Vagina (tissue), 2 donors: ENCODE measurements at regions of chr16 and their contacts with region 1.

Region 1: DNA sequence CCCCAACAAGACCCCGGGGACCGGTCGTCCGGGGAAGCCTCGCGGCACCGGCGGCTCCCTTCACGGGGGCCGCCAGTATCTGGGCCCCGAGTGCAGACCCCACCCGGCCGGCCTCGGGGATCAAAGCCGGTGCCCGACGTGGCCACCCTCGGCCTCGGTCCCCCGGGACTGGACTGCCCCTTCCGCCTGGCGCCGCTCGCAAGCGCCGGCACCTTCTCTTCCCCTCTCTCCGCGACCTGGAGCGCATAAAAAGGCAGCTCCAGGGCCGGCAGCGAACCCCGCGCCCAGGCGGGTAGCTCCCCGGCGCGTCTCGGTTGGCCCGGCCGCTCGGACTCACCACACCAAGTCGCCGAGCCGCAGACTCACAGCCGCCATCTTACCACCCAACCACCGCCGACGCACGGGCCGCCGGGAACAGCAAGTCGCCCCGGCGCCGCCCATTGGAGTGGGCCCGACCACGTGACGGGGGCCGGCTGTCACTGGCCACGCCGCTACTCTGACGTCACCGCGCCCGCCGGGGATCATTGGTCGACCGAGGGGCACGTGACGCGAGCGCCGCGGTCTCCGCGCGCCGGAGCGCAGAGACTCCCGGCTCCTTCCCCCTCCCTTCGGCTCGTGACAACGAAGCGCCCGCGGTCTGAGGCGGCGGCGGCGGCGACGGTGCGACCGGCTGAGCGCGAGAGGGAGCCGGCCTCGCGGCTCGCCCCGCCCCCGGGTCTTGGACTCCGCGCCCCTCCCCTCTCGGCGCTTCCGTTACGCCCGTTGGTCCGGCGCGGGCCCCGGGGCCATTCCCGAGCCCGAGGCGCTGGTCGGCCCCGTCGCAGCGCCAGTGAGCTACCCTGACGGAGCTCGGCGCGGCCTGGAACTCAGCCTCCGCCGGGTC is at the starts of genes GLYR1 and UBN1:
- DNase-seq: peak in 1 of 2 donors; percentile 98
- H3K4me3 ChIP-seq: peak within 1 kb of the TSS; percentile 68 to 70
- H3K27ac ChIP-seq: peak within 1 kb of the TSS; percentile 81
- H3K4me1 ChIP-seq: peaks cover 56% of the 10 kb centered on the region
- H3K27me3 ChIP-seq: no peaks in the 10 kb centered on the region
- CTCF ChIP-seq: no peak
- POLR2A ChIP-seq: peak in 1 of 2 donors; percentile 72
- total RNA-seq, gene GLYR1: 51.6 TPM
- total RNA-seq, gene UBN1: 17.2 TPM

Region 2: DNA sequence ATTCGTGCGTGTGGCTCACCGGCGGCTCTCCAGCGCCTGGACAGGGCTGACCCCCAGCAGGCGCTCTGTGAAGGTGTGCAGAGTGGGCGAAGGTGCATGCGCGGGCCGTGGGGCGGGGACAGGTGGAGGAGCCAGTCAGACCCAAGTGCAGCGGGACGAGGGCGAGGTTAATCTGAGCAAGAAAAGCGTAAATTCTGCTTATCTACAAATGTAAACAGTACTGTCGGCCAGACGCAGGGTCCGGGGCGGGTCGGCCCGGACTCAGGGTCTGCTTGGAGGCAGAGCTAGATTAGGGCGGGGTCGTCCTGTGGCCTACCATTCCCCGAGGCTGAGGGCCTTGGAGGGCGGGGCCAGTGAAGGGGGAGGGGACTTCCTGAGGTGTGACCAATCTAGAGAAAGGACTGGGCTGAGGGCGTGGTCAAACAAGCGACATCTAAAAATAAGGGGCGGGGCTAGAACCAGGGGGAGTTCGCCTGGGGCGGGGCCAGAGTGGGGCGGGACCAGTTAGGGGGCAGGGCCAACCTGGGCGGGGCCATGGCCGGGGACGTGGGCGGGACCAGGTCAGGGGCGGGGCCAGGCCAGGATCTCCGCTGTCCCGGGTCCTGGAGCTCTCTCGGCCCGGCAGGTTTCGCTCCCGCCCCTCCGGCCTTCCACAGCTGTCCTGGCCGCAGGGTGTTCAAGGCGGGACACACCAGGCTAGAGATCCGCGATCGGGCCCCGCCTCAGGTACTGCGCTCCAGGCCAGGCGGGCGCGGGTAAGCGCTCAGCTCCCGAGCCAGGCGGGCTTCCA is 110.8 kb after region 1 on chr16 and contains the start of gene SEC14L5:
- intact Hi-C with region 1: loop called (anchors 2 kb)
- DNase-seq: peak in 1 of 2 donors; percentile 97
- H3K4me3 ChIP-seq: peak within 1 kb of the TSS; percentile 52 to 59
- H3K27ac ChIP-seq: peak within 1 kb of the TSS; percentile 73
- H3K4me1 ChIP-seq: peaks cover 8% of the 10 kb centered on the region
- H3K27me3 ChIP-seq: no peaks in the 10 kb centered on the region
- CTCF ChIP-seq: no peak
- POLR2A ChIP-seq: no peak
- total RNA-seq, gene SEC14L5: 0.49 TPM

Region 3: DNA sequence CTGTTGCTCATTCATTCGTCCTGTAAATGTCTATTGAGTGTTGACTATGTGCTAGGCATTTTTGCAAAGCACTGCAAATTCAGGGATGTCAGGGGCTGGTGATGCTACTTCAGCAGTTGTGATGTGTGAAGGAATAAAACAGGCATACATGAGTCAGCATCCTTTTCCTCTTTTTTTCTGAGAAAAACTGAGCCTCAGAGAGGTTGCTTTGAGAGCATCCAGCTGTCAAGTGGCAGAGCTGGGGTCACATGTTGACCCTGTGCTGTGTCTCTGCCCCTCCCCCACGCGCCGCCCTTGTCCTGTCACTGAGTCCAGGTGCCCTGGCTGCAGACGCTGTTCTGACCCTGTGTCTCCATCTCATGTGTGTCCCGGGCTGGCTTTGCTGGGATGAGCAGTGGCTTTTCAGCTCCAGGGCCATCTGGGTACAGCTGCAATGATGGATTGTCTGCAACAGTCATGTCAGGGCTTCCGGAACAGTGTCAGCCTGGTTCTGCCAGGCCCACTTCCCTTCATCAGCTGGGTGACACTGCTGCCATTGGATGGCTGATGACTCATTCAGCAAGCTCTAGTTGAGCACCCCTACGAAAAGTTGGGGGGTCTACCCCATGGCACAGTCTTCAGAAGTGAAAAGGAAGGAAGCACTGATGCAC is 125.9 kb after region 1 on chr16:
- intact Hi-C with region 1: no loop called
- DNase-seq: no peak
- H3K4me3 ChIP-seq: no peak overlapping the region
- H3K27ac ChIP-seq: no peak overlapping the region
- H3K4me1 ChIP-seq: no peaks in the 10 kb centered on the region
- H3K27me3 ChIP-seq: no peaks in the 10 kb centered on the region
- CTCF ChIP-seq: no peak
- POLR2A ChIP-seq: no peak